IMR-90 (cell line): ENCODE measurements at regions of chr15 and their contacts with region 1.

Region 1: GRCh38 chr15:68149059-68149458 is 56.1 kb downstream of the CALML4 start:
- DNase-seq: peak; percentile 66
- ATAC-seq: peak; percentile 63; the same call in 1 of the 2 replicates
- H3K4me3 ChIP-seq: no peak overlapping the region
- H3K27ac ChIP-seq: no peak overlapping the region
- H3K4me1 ChIP-seq: peaks cover 4% of the 10 kb centered on the region; the same call in 1 of the 2 replicates
- H3K27me3 ChIP-seq: no peaks in the 10 kb centered on the region
- CTCF ChIP-seq: no peak
- POLR2A ChIP-seq: no peak
- RAD21 ChIP-seq: no peak

Region 2: GRCh38 chr15:68053701-68054627 is 95.1 kb before region 1 on chr15 and contains the start of gene PIAS1:
- CTCF ChIA-PET with region 1: interaction called, 3 read pairs
- POLR2A ChIA-PET with region 1: no interaction called
- dilution Hi-C with region 1: no loop called
- in situ Hi-C with region 1: no loop called
- intact Hi-C with region 1: loop called (anchors 1 kb)
- DNase-seq: peak; percentile 83
- ATAC-seq: peak; percentile 98
- H3K4me3 ChIP-seq: peak within 1 kb of the TSS; percentile 88
- H3K27ac ChIP-seq: peak within 1 kb of the TSS; percentile 57
- H3K4me1 ChIP-seq: no peaks in the 10 kb centered on the region; the same call in 1 of the 2 replicates
- H3K27me3 ChIP-seq: no peaks in the 10 kb centered on the region; the same call in 1 of the 2 replicates
- CTCF ChIP-seq: no peak
- POLR2A ChIP-seq: peak; percentile 74
- RAD21 ChIP-seq: no peak
- total RNA-seq, gene PIAS1: 41.1 and 63.6 TPM in 2 replicates

Region 3: GRCh38 chr15:68080783-68081182 is 68.3 kb before region 1 on chr15:
- CTCF ChIA-PET with region 1: no interaction called
- POLR2A ChIA-PET with region 1: no interaction called
- dilution Hi-C with region 1: no loop called
- in situ Hi-C with region 1: no loop called
- intact Hi-C with region 1: no loop called
- DNase-seq: no peak
- ATAC-seq: no peak
- H3K4me3 ChIP-seq: no peak overlapping the region
- H3K27ac ChIP-seq: no peak overlapping the region
- H3K4me1 ChIP-seq: no peaks in the 10 kb centered on the region; the same call in 1 of the 2 replicates
- H3K27me3 ChIP-seq: no peaks in the 10 kb centered on the region
- CTCF ChIP-seq: no peak
- POLR2A ChIP-seq: no peak
- RAD21 ChIP-seq: no peak